ENCODE measurements at regions of chr10 and their contacts with region 1.

Region 1: DNA sequence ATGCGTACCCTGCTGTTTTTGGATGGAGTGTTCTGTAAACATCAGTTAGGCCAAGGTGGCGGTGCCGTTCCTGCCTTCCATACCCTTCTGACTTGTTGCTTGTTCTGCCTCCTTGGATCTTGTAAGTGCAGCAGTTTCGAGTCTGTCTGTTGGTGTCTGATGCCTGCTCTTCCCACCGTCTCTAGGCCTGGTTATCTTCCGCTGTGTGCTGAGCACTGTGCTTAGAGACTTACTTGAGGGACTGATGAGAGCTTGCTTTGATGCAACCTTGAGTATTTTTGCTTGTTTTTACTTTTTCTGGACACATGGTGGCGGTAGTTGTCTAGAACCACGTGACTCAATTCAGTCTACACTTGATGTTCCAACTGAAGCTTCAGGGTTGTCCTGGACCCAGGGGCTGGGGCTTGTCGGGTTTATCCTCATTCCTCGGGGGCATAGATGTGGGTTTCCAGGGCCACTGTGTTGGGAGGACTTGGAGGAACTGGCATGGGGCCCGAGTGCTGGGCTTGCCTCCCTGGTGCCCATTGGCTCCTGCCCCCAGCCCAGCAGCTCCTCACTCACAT is 14.4 kb upstream of the SPRN start:
- DNase-seq: no peak
- H3K4me3 ChIP-seq: no peak overlapping the region
- CTCF ChIP-seq: peak; percentile 18

Region 2: GRCh38 chr10:132654702-132655661 is 783.8 kb before region 1 on chr10:
- CTCF ChIA-PET with region 1: no interaction called
- POLR2A ChIA-PET with region 1: no interaction called
- DNase-seq: no peak
- H3K4me3 ChIP-seq: no peak overlapping the region
- CTCF ChIP-seq: peak; percentile 97

Region 3: DNA sequence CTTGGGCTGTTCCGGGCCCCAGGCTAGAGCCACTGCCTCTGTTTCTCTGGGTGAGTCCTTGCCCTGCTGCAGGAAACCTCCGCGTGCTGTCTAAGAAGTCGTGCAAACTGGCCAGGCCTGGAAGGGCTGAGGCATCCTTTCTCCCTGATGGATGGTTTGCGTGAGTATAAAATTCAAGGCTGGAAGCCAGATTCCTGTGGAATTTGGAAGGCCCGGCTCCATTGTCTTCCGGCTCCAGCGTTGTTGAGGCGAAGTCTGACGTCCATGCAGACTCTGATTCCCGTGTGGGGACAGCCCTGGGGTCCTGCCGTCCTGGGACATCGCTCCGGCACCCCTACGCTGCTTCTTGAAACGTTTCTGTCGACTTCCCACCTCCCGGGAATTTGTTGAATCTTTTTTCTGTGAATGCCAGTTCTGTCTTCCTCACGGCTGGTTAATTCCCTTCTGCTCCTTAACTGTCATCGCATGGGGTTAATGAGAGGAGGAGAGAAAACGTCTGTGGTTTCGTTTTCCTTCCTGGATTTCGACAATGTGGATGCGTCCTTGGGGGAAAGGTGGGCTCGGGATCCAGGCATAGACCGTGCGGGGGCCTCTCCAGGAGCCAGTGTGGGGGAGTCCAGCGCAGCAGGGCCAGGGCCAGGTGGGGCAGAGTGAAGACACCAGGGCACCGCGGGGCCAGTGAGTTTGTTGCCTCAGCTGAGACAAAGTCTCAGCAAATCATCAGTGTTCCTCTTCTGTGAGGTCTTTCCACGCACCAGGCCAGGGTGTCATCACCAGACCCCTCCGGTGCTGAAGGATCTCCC is 463.1 kb before region 1 on chr10:
- CTCF ChIA-PET with region 1: no interaction called
- POLR2A ChIA-PET with region 1: no interaction called
- DNase-seq: no peak
- H3K4me3 ChIP-seq: no peak overlapping the region
- CTCF ChIP-seq: no peak

Region 4: DNA sequence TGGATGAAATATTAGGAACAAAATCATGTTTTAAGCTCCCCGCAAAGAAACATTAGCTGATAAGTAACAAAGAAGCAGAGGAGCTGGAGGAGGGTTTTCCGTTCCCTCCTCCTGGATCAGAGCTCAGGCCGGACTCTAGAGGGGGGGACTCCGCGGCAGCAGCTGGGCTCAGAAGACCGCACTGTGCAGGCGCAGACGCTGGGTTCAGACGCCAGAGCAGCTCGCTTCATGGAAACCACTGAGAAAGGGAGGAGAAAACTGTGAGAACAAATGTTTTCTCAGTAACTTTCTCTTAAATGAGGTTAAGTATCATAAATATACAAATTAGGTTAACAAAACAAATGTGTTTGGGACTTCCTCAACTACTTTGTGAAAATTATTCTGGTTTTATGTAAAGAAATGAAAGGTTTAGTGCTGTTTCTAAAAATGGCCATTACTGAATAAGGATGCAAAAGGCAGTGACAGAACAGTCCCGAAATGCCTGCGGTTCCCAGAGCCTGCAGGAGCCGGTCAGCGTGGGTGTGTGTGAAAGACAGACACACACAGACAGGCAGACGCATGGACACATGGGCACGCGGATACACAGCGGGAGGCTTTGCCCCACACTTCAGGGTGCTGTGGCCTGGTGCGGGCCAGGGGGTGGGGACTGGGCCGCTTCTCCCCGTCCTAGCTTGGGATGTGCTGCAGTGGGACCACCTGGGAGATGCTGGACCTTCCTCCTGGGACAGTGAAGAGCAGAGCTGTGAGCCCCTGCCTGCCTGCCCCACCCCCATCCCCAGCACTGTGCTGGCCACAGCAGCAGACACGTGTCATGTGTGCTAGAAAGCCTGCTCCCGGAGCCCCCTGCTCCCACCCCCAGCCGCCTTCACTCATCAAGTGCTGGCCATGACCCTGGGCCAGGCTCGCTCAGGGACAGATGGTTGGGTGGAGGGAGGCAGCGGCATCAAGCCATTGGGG is 371.4 kb before region 1 on chr10:
- CTCF ChIA-PET with region 1: no interaction called
- POLR2A ChIA-PET with region 1: no interaction called
- DNase-seq: no peak
- H3K4me3 ChIP-seq: no peak overlapping the region
- CTCF ChIP-seq: no peak

Region 5: DNA sequence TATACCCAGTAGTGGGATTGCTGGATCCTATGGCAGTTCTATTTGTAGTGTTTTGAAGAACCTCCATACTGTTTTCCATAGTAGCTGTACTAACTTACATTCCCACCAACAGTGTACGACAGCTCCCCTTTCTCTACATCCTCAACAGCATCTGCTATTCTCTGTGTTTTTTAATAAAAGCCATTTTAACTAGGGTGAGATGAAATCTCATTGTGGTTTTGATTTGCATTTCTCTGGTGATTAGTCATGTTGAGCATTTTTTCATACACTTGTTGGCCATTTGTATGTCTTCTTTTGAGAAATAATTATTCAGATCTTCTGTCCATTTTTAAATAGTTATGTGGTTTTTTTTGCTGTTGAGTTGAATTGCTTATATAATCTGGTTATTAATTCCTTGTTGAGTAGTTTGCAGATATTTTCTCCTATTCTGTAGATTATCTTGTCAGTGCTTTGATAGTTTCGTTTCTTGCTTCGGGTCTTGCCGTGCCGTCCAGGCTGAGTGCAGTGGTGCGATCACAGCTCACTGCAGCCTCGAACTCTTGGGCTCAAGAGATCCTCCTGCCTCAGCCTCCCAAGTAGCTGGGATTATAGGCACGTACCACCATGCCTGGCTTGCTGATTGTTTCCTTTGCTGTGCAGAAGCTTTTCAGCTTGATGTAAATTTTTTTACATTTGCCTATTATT is 32.8 kb before region 1 on chr10:
- CTCF ChIA-PET with region 1: no interaction called
- POLR2A ChIA-PET with region 1: no interaction called
- DNase-seq: no peak
- H3K4me3 ChIP-seq: no peak overlapping the region
- CTCF ChIP-seq: no peak

Region 6: GRCh38 chr10:133458710-133459453 is 20.1 kb after region 1 on chr10:
- CTCF ChIA-PET with region 1: interaction called, 11 read pairs
- POLR2A ChIA-PET with region 1: no interaction called
- DNase-seq: no peak
- H3K4me3 ChIP-seq: no peak overlapping the region
- CTCF ChIP-seq: no peak

Measured in AG04449 (cell line).